Right ventricle myocardium superior (tissue), 1 donor: ENCODE measurements at regions of chr15 and their contacts with region 1.

Region 1: DNA sequence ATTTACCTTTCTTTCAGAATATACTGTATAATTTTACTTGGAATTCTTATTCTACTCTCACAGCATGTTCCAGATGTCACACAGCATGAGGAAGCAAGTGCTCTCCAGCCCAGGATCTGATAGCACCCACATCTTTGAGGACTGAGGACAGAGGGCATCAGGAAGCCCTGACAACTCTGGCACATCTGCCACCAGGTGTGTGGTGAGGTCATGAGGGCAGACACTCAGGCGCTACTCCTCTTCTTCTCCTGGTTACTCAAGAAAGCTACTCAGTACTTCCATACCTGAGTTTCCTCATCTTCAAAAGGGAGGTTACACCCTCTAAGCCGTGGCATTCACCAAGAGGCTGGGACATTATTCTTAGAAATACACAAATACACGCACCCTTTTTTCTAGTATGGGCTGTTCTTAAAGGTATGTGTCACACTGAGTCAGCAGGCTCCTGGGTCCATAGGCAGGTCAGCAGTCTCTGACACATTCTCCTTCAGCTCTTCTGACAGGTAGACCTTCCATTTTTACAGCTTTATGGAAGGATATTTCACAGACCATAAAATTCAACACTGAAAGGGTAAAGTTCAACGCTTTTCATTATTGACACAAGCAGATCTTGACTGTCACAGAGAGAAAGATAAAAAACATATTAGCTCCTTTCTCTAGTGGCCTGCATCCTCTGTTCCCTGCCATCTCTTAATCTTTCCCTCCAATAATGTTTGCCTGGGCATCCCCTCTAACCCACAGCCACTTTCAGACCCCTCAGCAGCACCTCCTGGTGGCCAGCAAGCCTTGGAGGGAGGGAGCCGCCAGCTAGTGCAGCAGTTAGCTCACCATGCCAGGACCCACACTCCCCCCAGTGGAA is 103.2 kb upstream of the TJP1 start:
- DNase-seq: peak; percentile 81
- ATAC-seq: peak; percentile 94

Region 2: GRCh38 chr15:29156521-29156920 is 768.9 kb before region 1 on chr15:
- intact Hi-C with region 1: no loop called
- DNase-seq: no peak
- ATAC-seq: no peak

Region 3: GRCh38 chr15:29731865-29732264 is 193.6 kb before region 1 on chr15:
- intact Hi-C with region 1: no loop called
- DNase-seq: no peak
- ATAC-seq: no peak

Region 4: GRCh38 chr15:29747837-29748417 is 177.5 kb before region 1 on chr15:
- intact Hi-C with region 1: loop called (anchors 5 kb)
- DNase-seq: no peak
- ATAC-seq: peak; percentile 44

Region 5: DNA sequence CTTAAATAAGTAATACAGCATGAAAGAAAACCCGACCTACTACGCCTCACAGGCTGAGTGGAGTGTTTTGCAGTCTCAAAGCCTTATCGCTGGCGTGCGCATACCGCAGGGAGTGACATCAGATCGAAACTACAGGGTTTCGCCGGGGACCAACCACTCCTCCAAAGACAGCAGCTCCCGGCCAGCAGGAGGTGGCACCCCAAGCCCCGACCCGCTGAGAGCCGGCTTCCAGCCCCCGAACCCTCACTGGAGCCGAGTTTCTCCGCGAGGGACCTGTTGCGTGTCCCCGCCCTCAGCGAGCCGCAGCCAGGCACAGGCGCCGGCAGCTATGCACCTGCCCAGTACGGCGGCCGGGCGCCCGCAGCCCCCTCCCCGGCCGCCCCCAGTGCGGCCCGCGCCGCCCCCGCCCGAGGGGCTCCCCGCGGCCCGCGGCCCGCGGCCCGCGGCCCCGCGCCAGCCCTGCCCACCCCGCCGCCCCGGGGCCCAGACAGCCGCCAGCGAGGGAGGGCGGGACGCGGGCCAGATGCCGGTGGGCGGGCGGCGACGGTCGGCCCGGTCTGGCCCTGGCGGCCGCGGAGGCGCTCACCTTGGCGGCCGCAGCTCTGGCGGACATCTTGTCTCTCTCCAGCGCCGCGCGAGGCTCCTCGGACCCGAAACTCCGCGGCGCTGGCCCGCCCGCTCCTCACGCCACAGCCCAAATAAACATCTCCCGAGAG is 103.9 kb before region 1 on chr15:
- intact Hi-C with region 1: loop called (anchors 5 kb)
- DNase-seq: peak; percentile 85
- ATAC-seq: peak; percentile 53

Region 6: DNA sequence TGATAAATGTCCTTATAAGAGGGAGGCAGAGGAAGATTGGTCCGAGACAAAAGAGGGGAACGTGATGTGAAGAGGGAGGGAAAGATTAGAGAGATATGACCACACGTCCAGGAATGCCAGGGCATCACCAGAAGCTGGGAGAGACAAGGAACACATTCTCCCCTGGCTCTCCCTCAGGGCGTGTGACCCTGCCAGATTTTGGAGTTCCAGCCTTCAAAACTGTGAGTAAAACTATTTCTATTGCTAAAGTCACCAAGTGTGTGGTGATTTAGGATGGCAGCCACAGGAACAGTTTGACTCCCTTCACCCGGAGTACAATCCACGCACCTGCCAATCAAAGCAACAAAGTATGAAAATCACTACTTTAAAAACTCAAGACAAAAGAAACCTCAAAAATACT is 71.0 kb before region 1 on chr15:
- intact Hi-C with region 1: no loop called
- DNase-seq: no peak
- ATAC-seq: no peak

Region 7: GRCh38 chr15:29870495-29871151 is 54.8 kb before region 1 on chr15:
- intact Hi-C with region 1: loop called (anchors 5 kb)
- DNase-seq: peak; percentile 64
- ATAC-seq: peak; percentile 70

Region 8: GRCh38 chr15:29883126-29883525 is 42.3 kb before region 1 on chr15:
- intact Hi-C with region 1: no loop called
- DNase-seq: no peak
- ATAC-seq: peak; percentile 83